ENCODE measurements at regions of chr1 and their contacts with region 1.

Region 1: DNA sequence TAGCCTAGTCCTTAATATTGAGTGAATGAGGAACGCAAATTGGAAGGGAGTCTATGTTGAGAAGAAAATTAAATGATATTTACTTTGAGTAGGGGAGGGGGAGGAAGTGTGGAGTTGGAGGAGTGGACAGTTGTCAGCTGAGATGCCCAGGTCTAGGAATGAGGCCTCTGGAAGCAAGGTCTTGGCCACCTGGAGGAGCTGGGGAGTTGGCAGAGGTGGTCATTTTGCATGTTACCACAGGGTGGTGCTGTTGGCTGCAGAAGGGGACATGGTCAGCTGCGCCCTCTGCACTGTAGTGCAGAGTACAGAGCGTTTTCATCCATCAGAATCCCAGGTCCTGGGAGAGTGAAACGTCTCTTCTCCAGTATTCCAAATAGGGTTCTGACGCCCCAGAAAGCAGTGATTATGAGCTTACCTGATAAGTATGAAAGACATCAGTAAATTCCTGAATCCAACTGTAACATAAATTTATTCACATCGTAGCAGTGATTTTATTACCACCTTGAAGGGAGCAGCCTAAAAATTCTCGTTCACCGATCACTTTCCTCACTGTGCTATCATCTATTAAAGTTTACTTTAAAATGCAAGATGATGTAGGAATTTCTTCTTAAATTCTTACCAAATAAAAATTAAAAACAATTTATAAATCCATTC is 13.8 kb downstream of the PARK7 start:
- DNase-seq: peak; percentile 61 to 77
- ATAC-seq: peak; percentile 91 to 98
- H3K4me3 ChIP-seq: no peak overlapping the region
- H3K27ac ChIP-seq: peak overlapping the region; percentile 51 to 85 (median 68)
- H3K4me1 ChIP-seq: peaks cover 17 to 30% of the 10 kb centered on the region in 2 donors
- H3K27me3 ChIP-seq: no peaks in the 10 kb centered on the region
- CTCF ChIP-seq: peak; percentile 82 to 92 (median 88)
- POLR2A ChIP-seq: no peak

Region 2: GRCh38 chr1:8252266-8252951 is 277.1 kb after region 1 on chr1:
- in situ Hi-C with region 1: no loop called
- intact Hi-C with region 1: loop called (anchors 5 kb)
- DNase-seq: peak; percentile 54 to 67
- ATAC-seq: peak; percentile 77 to 93
- H3K4me3 ChIP-seq: no peak overlapping the region
- H3K27ac ChIP-seq: peak overlapping the region in 1 of 4 donors; percentile 46
- H3K4me1 ChIP-seq: no peaks in the 10 kb centered on the region
- H3K27me3 ChIP-seq: no peaks in the 10 kb centered on the region
- CTCF ChIP-seq: no peak
- POLR2A ChIP-seq: no peak

Region 3: GRCh38 chr1:8314346-8315280 is 339.3 kb after region 1 on chr1:
- in situ Hi-C with region 1: loop called (anchors 5 to 10 kb)
- intact Hi-C with region 1: loop called (anchors 1 kb)
- DNase-seq: peak; percentile 49 to 71
- ATAC-seq: peak; percentile 85 to 90
- H3K4me3 ChIP-seq: no peak overlapping the region
- H3K27ac ChIP-seq: no peak overlapping the region
- H3K4me1 ChIP-seq: peaks cover 9 to 29% of the 10 kb centered on the region in 2 donors
- H3K27me3 ChIP-seq: peaks cover 0 to 6% (median 3%) of the 10 kb centered on the region in 3 donors
- CTCF ChIP-seq: peak; percentile 90 to 95 (median 91)
- POLR2A ChIP-seq: no peak

Region 4: GRCh38 chr1:8348777-8349491 is 373.6 kb after region 1 on chr1:
- in situ Hi-C with region 1: loop called (anchors 10 kb)
- intact Hi-C with region 1: loop called (anchors 1 kb)
- DNase-seq: peak in 1 of 2 donors; percentile 61
- ATAC-seq: peak; percentile 31 to 34
- H3K4me3 ChIP-seq: no peak overlapping the region
- H3K27ac ChIP-seq: peak overlapping the region in 1 of 4 donors; percentile 35
- H3K4me1 ChIP-seq: peaks cover 22 to 33% of the 10 kb centered on the region in 2 donors
- H3K27me3 ChIP-seq: no peaks in the 10 kb centered on the region
- CTCF ChIP-seq: peak; percentile 70 to 94 (median 93)
- POLR2A ChIP-seq: no peak

Measured in gastrocnemius medialis (tissue), 4 donors.